ENCODE measurements at regions of chr12 and their contacts with region 1.

Region 1: GRCh38 chr12:57462251-57462911 is 2.8 kb downstream of the GLI1 start:
- DNase-seq: peak; percentile 92
- H3K4me3 ChIP-seq: peak overlapping the region; percentile 52
- H3K27ac ChIP-seq: peak overlapping the region; percentile 58
- H3K4me1 ChIP-seq: peaks cover 7% of the 10 kb centered on the region
- H3K27me3 ChIP-seq: peaks cover 5% of the 10 kb centered on the region
- CTCF ChIP-seq: peak; percentile 89

Region 2: DNA sequence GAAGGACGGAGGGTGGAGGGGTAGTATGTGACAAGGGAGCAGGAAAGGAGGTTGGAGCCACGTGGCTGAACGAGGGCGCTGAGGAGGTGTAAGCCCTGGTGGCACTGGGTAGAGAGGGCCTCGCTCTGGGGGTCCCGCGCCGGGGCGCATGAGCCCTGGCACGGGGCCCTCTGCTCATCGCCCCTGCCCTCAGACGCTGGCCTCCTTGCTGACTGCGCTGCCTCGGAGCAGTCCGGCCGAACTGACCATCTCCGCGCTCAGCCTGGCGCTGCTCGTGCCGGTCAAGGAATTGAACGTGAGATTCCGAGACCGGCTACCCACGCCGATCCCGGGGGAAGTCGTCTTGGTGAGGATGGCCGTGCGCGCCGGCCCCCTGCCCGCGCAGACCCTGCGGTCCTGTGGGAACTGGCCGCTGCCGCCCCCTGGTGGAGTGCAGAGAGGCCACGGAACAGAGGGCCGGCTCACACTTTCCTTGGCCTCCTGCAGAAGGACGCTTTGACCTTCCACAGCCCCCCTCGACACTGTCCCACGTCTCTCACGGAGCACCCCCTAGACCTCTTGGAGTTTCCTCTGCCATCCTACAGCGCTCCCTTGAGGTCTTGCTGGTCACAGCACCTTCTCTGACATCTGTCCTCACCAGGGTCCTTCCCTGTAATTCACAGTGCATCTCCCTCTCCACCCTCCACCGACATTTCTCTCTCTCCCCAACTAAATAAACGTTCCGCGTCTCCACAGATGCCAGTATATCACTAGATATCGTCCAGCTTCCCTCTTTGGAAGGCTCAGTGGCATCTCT is 159.3 kb after region 1 on chr12:
- intact Hi-C with region 1: loop called (anchors 5 kb)
- DNase-seq: peak; percentile 50
- H3K4me3 ChIP-seq: peak overlapping the region; percentile 37
- H3K27ac ChIP-seq: no peak overlapping the region
- H3K4me1 ChIP-seq: peaks cover 11% of the 10 kb centered on the region
- H3K27me3 ChIP-seq: peaks cover 55% of the 10 kb centered on the region
- CTCF ChIP-seq: peak; percentile 94

Region 3: DNA sequence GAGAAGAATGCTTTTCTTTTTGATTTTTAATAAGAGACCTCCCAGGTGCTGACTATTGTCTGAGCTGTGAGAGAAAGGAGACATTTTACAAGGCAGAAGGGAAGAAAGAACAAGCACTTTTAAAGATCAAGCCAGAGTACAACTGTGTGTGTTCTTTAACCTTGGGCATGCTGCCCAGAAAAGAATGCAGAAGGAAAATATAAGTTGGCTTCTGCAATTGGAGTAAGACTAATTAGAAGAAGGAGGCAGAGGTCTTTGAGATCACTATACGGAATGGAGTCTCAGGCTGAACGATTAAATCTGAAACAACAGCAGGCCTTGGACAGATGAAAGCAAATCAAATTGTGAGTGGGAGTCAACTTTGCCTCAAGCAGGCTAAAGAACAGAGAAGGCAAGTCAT is 709.5 kb after region 1 on chr12:
- intact Hi-C with region 1: no loop called
- DNase-seq: peak; percentile 37
- H3K4me3 ChIP-seq: no peak overlapping the region
- H3K27ac ChIP-seq: no peak overlapping the region
- H3K4me1 ChIP-seq: no peaks in the 10 kb centered on the region
- H3K27me3 ChIP-seq: no peaks in the 10 kb centered on the region
- CTCF ChIP-seq: no peak

Measured in colonic mucosa (tissue), 4 donors.